Body of pancreas (tissue), 4 donors: ENCODE measurements at regions of chr19 and their contacts with region 1.

Region 1: GRCh38 chr19:56099638-56100539 is 21.2 kb downstream of the ZNF787 start:
- DNase-seq: no peak
- ATAC-seq: no peak
- H3K4me3 ChIP-seq: no peak overlapping the region
- H3K27ac ChIP-seq: no peak overlapping the region
- H3K4me1 ChIP-seq: peaks cover 6% of the 10 kb centered on the region
- H3K27me3 ChIP-seq: no peaks in the 10 kb centered on the region
- CTCF ChIP-seq: no peak
- POLR2A ChIP-seq: no peak

Region 2: GRCh38 chr19:56162258-56162657 is 62.4 kb after region 1 on chr19:
- intact Hi-C with region 1: loop called (anchors 5 kb)
- DNase-seq: no peak
- ATAC-seq: no peak
- H3K4me3 ChIP-seq: no peak overlapping the region
- H3K27ac ChIP-seq: no peak overlapping the region
- H3K4me1 ChIP-seq: peaks cover under 1% of the 10 kb centered on the region
- H3K27me3 ChIP-seq: no peaks in the 10 kb centered on the region
- CTCF ChIP-seq: no peak
- POLR2A ChIP-seq: no peak

Region 3: DNA sequence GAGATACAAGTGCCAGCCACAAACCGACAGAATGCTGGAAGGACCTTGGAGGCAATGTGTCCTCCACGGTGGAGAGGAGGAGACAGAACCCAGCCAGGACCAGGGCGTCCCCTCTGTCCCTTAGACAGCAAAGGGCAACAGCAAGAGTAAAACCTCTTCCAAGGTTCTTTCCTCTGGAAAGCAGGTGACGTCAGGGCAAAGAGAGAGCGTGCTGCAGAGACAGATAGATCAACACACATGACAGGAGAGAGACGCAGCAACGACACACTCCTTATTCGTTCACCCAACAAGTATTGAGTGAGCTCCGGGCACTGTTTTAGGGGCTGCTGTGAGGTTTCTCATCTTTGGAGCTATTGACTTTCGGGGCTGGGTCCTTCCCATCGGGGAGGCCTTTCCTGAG is 74.7 kb after region 1 on chr19:
- intact Hi-C with region 1: no loop called
- DNase-seq: no peak
- ATAC-seq: no peak
- H3K4me3 ChIP-seq: no peak overlapping the region
- H3K27ac ChIP-seq: no peak overlapping the region
- H3K4me1 ChIP-seq: peaks cover 14% of the 10 kb centered on the region
- H3K27me3 ChIP-seq: no peaks in the 10 kb centered on the region
- CTCF ChIP-seq: no peak
- POLR2A ChIP-seq: no peak